ENCODE measurements at regions of chr1 and their contacts with region 1.

Region 1: GRCh38 chr1:1291548-1292441 is 11.6 kb downstream of the SCNN1D start:
- DNase-seq: no peak
- ATAC-seq: peak; percentile 86
- H3K4me3 ChIP-seq: no peak overlapping the region
- H3K27ac ChIP-seq: no peak overlapping the region
- H3K4me1 ChIP-seq: peaks cover 12% of the 10 kb centered on the region
- H3K27me3 ChIP-seq: no peaks in the 10 kb centered on the region
- CTCF ChIP-seq: peak; percentile 87

Region 2: GRCh38 chr1:993379-993995 is 298.3 kb before region 1 on chr1:
- CTCF ChIA-PET with region 1: interaction called, 11 read pairs
- POLR2A ChIA-PET with region 1: no interaction called
- in situ Hi-C with region 1: no loop called
- intact Hi-C with region 1: no loop called
- DNase-seq: no peak
- ATAC-seq: no peak
- H3K4me3 ChIP-seq: no peak overlapping the region
- H3K27ac ChIP-seq: no peak overlapping the region
- H3K4me1 ChIP-seq: peaks cover 16% of the 10 kb centered on the region
- H3K27me3 ChIP-seq: no peaks in the 10 kb centered on the region
- CTCF ChIP-seq: no peak

Region 3: DNA sequence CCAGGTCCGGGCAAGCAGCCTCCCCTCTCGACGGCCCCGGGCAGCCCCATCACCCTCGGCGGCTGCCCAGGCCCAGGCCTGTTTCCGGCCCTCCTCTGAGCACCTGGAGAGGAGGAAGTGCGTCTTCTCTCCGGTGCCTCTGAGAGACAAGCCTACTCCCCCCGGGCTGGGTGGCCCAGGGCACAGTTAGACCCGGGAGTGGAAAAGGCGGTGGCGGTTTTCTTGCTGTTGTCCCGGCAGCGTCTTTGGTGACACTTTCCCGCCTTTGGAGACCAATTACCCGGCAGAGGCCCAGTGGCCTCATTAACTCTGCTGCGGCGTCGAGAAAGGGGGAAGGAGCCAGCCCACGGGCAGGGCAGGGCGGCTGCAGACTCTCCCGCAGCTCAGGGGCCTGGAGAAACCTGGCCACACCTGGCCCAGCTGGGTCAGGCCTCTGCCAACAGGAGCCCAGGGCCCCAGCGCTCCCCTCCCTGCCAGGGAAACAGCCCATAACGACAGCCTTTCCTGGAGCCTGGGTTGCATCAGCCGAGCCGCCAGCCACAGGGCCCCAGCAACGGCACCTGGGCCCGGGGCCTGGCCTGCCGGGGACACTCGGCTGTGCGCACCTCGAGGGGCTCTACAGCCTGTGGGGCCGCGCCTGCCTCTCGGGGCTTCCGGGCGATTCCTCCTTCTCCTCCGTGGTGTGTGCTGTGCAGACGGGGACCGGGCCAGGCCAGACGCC is 147.5 kb before region 1 on chr1:
- CTCF ChIA-PET with region 1: no interaction called
- POLR2A ChIA-PET with region 1: no interaction called
- in situ Hi-C with region 1: no loop called
- intact Hi-C with region 1: no loop called
- DNase-seq: no peak
- ATAC-seq: 0 out of 2 replicates have a peak, but pooled peaks have one; percentile 17
- H3K4me3 ChIP-seq: no peak overlapping the region
- H3K27ac ChIP-seq: no peak overlapping the region; the same call in 1 of the 2 replicates
- H3K4me1 ChIP-seq: no peaks in the 10 kb centered on the region; the same call in 1 of the 2 replicates
- H3K27me3 ChIP-seq: no peaks in the 10 kb centered on the region
- CTCF ChIP-seq: no peak

Region 4: DNA sequence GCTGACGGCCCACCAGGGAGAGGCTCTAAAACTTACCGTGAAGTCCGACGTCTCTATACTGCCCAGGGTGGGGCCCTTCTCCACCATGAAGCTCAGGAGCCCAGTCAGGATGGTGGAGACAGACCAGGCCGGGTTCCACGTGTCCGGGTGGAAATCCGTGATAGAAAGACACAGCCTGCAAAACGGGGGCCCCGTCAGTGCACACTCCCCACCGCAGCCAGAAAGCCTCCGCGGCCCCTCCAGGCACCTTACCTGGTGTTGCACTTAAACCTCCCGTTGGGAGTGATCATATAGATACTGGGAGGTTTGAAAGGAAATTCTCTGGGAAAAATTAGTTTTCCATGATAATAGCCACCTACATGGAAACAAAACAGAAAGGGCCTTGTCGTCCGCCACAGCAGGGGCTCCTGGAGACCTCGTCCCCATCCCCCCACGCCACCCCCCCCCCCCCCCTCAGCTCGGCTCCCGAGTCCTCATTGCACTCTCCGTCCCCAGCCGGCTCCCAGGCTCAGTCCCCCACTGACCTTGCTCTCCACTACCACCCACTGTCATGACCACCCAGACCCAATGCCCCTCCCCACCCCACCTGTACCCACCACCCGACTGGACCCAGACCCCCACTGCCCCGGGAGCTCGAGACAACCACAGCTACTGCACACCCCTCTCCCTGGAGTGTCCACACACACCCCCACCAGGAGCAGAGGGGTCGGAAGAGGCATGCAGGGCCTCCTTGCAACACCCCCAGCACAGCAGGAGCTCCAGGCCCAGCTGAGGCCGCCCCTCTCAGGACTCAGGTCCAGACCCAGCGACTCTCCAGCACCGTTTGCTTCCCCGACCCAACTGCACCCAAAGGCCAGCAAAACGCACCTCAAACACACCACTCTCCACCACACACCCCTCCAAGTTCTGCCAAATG is 34.6 kb before region 1 on chr1:
- CTCF ChIA-PET with region 1: interaction called, 12 read pairs
- POLR2A ChIA-PET with region 1: no interaction called
- in situ Hi-C with region 1: no loop called
- intact Hi-C with region 1: no loop called
- DNase-seq: no peak
- ATAC-seq: no peak
- H3K4me3 ChIP-seq: no peak overlapping the region
- H3K27ac ChIP-seq: no peak overlapping the region
- H3K4me1 ChIP-seq: no peaks in the 10 kb centered on the region
- H3K27me3 ChIP-seq: no peaks in the 10 kb centered on the region
- CTCF ChIP-seq: no peak

Measured in Panc1 (cell line).